ENCODE measurements at regions of chrX and their contacts with region 1.

Region 1: GRCh38 chrX:135530097-135530496 is 9.6 kb downstream of the INTS6L start:
- DNase-seq: peak in 1 of 9 experiments; percentile 10
- ATAC-seq: no peak
- H3K4me3 ChIP-seq: no peak overlapping the region
- H3K4me3 Mint-ChIP-seq: no peak overlapping the region
- H3K27ac ChIP-seq: no peak overlapping the region
- H3K27ac Mint-ChIP-seq: no peak overlapping the region
- H3K4me1 ChIP-seq: no peaks in the 10 kb centered on the region
- H3K4me1 Mint-ChIP-seq: peaks cover 70% of the 10 kb centered on the region
- H3K27me3 ChIP-seq: no peaks in the 10 kb centered on the region
- H3K27me3 Mint-ChIP-seq: no peaks in the 10 kb centered on the region
- CTCF ChIP-seq: no peak

Region 2: DNA sequence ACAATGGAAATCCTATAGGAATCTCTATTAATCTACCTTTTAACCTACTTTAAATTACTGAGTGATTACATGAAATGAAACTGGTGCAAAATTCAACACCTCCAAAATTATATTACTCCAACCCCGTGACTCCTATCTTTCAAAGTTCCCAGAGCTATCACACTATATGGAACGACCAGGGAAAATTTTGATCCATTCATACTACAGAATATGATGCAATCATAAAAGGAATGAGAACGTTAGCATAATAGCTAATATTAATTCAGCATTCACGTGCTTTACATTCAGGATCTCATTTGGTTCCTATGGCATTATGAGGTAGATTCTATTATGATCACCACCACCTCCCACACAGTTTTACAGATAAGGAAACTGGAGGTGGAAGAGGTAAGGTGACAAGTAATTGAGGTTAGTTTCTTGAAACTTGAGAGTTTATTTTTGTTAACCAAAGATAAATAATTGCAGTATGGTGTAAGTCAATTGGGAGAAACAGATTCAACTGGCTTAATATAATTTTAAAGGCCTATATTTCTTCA is 39.0 kb before region 1 on chrX:
- CTCF ChIA-PET with region 1: no interaction called
- POLR2A ChIA-PET with region 1: no interaction called
- intact Hi-C with region 1: loop called in 1 of 2 experiments (anchors 5 kb)
- DNase-seq: no peak
- ATAC-seq: no peak
- H3K4me3 ChIP-seq: no peak overlapping the region
- H3K4me3 Mint-ChIP-seq: no peak overlapping the region
- H3K27ac ChIP-seq: no peak overlapping the region
- H3K27ac Mint-ChIP-seq: no peak overlapping the region
- H3K4me1 ChIP-seq: no peaks in the 10 kb centered on the region
- H3K4me1 Mint-ChIP-seq: no peaks in the 10 kb centered on the region
- H3K27me3 ChIP-seq: no peaks in the 10 kb centered on the region
- H3K27me3 Mint-ChIP-seq: no peaks in the 10 kb centered on the region
- CTCF ChIP-seq: no peak